Calu3 (cell line): ENCODE measurements at regions of chr5 and their contacts with region 1.

Region 1: DNA sequence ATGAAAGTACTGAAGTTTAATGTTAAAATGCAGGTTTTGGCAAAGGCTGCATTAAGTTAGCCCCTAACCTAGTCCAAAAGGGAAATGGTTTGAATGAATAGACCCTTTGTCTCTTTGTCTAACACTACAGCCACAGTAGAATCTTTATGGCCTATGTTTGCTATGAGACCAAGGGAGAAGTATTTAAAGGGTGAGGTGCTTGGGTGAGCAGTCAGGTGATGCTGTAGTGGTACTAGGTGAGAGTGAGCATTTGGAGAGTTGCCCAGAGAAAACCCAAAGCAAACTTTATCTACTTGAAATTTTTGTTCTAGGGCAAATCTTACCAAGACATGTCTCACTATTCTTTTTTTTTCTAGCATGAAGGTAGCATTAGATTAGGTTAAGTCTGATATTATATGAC is 1961.4 kb upstream of the WWC1 start:
- DNase-seq: peak; percentile 32
- H3K4me3 Mint-ChIP-seq: no peak overlapping the region
- H3K27ac Mint-ChIP-seq: no peak overlapping the region
- H3K4me1 Mint-ChIP-seq: peaks cover 18% of the 10 kb centered on the region
- H3K27me3 Mint-ChIP-seq: no peaks in the 10 kb centered on the region
- CTCF ChIP-seq: no peak

Region 2: GRCh38 chr5:166211640-166212039 is 118.4 kb before region 1 on chr5:
- CTCF ChIA-PET with region 1: no interaction called
- intact Hi-C with region 1: loop called (anchors 5 kb)
- DNase-seq: no peak
- H3K4me3 Mint-ChIP-seq: no peak overlapping the region
- H3K27ac Mint-ChIP-seq: no peak overlapping the region
- H3K4me1 Mint-ChIP-seq: no peaks in the 10 kb centered on the region
- H3K27me3 Mint-ChIP-seq: no peaks in the 10 kb centered on the region
- CTCF ChIP-seq: no peak